PC-9 (cell line): ENCODE measurements at regions of chr16 and their contacts with region 1.

Region 1: GRCh38 chr16:57810197-57811031 is 8.1 kb upstream of the KIFC3 start:
- DNase-seq: peak; percentile 91 to 97
- H3K4me3 ChIP-seq: peak overlapping the region; percentile 23; the same call in 1 of the 2 replicates
- H3K27ac ChIP-seq: peak overlapping the region; percentile 88
- H3K4me1 ChIP-seq: peaks cover 81% of the 10 kb centered on the region
- H3K27me3 ChIP-seq: no peaks in the 10 kb centered on the region
- CTCF ChIP-seq: no peak

Region 2: DNA sequence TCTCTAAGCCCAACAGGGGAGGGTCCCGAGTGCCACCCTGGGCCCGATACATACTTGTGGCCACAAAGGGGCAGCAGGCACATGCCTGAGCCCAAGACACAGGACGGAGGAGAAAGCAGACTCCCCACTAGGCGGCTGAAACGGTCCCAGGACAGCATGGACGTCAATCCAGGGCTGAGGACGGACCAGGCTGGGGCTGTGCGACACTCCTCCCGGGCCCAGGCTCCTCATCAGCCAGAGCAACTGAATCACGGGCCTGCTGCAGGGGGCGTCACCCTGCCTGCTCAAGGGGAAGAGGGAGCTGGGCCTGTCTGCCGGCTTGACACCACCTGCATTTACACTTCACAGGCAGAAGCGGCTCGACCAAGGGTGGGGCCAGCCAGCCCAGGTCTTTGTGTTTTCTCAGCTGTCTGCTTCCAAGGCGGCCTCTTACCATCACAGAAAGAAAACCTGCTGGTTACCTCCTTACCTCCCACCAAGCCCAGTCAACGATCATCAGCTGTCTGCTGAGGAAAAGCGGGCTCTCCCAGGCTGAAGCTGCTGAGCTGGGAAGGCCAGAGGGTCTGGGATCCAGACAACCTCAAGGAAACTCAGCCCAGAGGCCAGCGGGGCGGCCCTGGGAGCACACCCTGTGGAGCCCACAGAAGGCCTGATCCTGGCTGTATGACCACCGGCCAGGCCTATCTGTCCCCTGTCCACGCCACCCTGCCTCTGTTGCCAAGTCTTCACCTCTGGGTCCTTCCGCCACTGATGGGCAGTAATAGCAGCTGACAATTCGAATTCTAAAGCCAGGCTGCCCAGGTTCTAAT is 34.5 kb before region 1 on chr16:
- CTCF ChIA-PET with region 1: no interaction called
- POLR2A ChIA-PET with region 1: no interaction called
- intact Hi-C with region 1: no loop called
- DNase-seq: no peak
- H3K4me3 ChIP-seq: no peak overlapping the region
- H3K27ac ChIP-seq: no peak overlapping the region
- H3K4me1 ChIP-seq: peaks cover 16% of the 10 kb centered on the region
- H3K27me3 ChIP-seq: no peaks in the 10 kb centered on the region
- CTCF ChIP-seq: no peak

Region 3: DNA sequence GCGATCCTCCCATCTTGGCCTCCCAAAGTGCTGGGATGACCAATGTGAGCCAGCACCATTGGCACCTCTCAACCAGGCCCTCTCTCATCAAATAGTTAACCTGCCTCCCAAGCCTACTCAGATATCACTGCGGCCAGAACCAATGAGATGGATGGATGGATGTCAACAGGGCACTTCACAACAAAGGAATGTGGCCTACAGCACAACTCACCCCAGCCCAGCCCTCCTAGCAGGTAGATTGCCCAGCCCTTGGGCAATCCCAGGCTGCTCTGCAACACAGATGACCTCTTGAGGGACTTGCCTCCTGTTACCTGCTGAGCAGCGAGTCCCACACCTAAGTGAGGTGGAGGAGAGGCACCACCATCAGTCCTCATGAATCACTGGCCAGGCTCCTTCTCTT is 14.5 kb after region 1 on chr16:
- CTCF ChIA-PET with region 1: no interaction called
- POLR2A ChIA-PET with region 1: no interaction called
- intact Hi-C with region 1: loop called (anchors 1 kb)
- DNase-seq: peak; percentile 91 to 99
- H3K4me3 ChIP-seq: no peak overlapping the region
- H3K27ac ChIP-seq: peak overlapping the region; percentile 87
- H3K4me1 ChIP-seq: peaks cover 68% of the 10 kb centered on the region
- H3K27me3 ChIP-seq: no peaks in the 10 kb centered on the region
- CTCF ChIP-seq: no peak

Region 4: DNA sequence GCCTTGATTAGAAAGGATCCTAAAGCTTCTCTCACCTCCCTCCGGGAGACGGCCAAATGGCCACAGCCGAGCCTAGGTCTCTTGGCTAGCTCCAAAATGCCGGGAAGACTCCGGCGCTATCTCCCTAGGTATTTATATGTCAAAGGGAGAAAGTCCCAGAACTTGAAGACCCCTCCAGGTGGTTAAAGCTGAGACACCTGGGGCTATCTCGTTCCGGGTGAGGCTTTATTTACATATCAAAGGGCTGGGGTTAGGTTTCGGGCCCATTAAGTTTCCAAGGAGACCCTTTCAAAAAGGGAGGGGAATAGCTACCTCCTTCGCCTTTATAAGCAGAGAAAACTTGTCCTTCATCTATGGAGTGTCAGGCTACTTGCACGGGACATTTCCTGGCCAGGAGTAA is 62.8 kb after region 1 on chr16:
- CTCF ChIA-PET with region 1: no interaction called
- POLR2A ChIA-PET with region 1: no interaction called
- intact Hi-C with region 1: no loop called
- DNase-seq: no peak
- H3K4me3 ChIP-seq: no peak overlapping the region
- H3K27ac ChIP-seq: no peak overlapping the region
- H3K4me1 ChIP-seq: peaks cover 21% of the 10 kb centered on the region
- H3K27me3 ChIP-seq: no peaks in the 10 kb centered on the region
- CTCF ChIP-seq: no peak

Region 5: GRCh38 chr16:57893559-57894389 is 83.4 kb after region 1 on chr16:
- CTCF ChIA-PET with region 1: no interaction called
- POLR2A ChIA-PET with region 1: no interaction called
- intact Hi-C with region 1: no loop called
- DNase-seq: peak; percentile 62 to 99
- H3K4me3 ChIP-seq: peak overlapping the region; percentile 10; the same call in 1 of the 2 replicates
- H3K27ac ChIP-seq: peak overlapping the region; percentile 97
- H3K4me1 ChIP-seq: peaks cover 56% of the 10 kb centered on the region
- H3K27me3 ChIP-seq: no peaks in the 10 kb centered on the region
- CTCF ChIP-seq: no peak